Naive thymus-derived CD4-positive, alpha-beta T cell (primary cell): ENCODE measurements at regions of chr11 and their contacts with region 1.

Region 1: GRCh38 chr11:46346886-46347636 is at the start of gene DGKZ:
- DNase-seq: peak; percentile 85 to 100 (median 96)
- ATAC-seq: peak; percentile 92
- H3K4me3 ChIP-seq: peak within 1 kb of the TSS; percentile 91
- H3K4me3 Mint-ChIP-seq: peak within 1 kb of the TSS; percentile 93 to 97 (median 95)
- H3K27ac ChIP-seq: peak within 1 kb of the TSS; percentile 83
- H3K27ac Mint-ChIP-seq: peak within 1 kb of the TSS; percentile 89 to 98 (median 94)
- H3K4me1 ChIP-seq: peaks cover 46 to 79% of the 10 kb centered on the region in 2 donors
- H3K4me1 Mint-ChIP-seq: peaks cover 61 to 85% (median 75%) of the 10 kb centered on the region in 7 donors
- H3K27me3 ChIP-seq: no peaks in the 10 kb centered on the region
- H3K27me3 Mint-ChIP-seq: peaks cover 0 to 3% (median 0%) of the 10 kb centered on the region in 5 donors
- total RNA-seq, gene DGKZ: 146 to 291 (median 263) TPM

Region 2: GRCh38 chr11:45872513-45873356 is 474.3 kb before region 1 on chr11:
- CTCF ChIA-PET with region 1: no interaction called
- POLR2A ChIA-PET with region 1: no interaction called
- intact Hi-C with region 1: no loop called
- DNase-seq: peak in 1 of 9 donors; percentile 16
- ATAC-seq: peak; percentile 73
- H3K4me3 ChIP-seq: no peak overlapping the region
- H3K4me3 Mint-ChIP-seq: no peak overlapping the region
- H3K27ac ChIP-seq: no peak overlapping the region
- H3K27ac Mint-ChIP-seq: no peak overlapping the region
- H3K4me1 ChIP-seq: no peaks in the 10 kb centered on the region
- H3K4me1 Mint-ChIP-seq: peaks cover 0 to 5% (median 0%) of the 10 kb centered on the region in 7 donors
- H3K27me3 ChIP-seq: no peaks in the 10 kb centered on the region
- H3K27me3 Mint-ChIP-seq: no peaks in the 10 kb centered on the region

Region 3: DNA sequence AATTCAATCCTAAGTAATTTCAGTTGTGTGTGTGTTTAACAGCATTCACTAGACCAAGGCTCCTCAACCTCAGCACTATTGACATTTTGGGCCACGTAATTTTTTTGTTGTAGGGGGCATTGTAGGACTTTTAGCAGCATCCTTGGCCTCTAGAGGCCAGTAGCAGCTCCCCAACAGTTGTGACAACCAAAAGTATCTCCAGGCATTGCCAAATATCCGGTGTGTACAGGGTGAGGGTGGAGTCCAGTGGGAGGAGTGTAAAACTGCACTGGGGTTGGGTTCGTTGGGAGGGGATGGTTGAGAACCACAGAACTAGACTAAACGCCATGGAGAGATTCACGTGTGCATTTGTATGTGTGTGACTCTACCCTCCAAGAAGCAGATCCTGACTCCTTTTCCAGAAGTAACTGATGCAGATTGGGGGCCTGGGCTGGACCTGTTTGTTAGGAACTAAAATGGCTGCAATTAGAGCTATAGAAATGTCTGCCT is 219.9 kb before region 1 on chr11:
- CTCF ChIA-PET with region 1: no interaction called
- POLR2A ChIA-PET with region 1: interaction called, 4 read pairs
- intact Hi-C with region 1: loop called (anchors 1 to 5 kb)
- DNase-seq: peak in 8 of 9 donors; percentile 45 to 70 (median 59)
- ATAC-seq: peak; percentile 100
- H3K4me3 ChIP-seq: no peak overlapping the region
- H3K4me3 Mint-ChIP-seq: peak overlapping the region in 6 of 10 donors; percentile 7 to 67 (median 40)
- H3K27ac ChIP-seq: no peak overlapping the region
- H3K27ac Mint-ChIP-seq: peak overlapping the region in 7 of 9 donors; percentile 4 to 78 (median 60)
- H3K4me1 ChIP-seq: peaks cover 4 to 13% of the 10 kb centered on the region in 2 donors
- H3K4me1 Mint-ChIP-seq: peaks cover 8 to 19% (median 17%) of the 10 kb centered on the region in 7 donors
- H3K27me3 ChIP-seq: no peaks in the 10 kb centered on the region
- H3K27me3 Mint-ChIP-seq: peaks cover 0 to 3% (median 0%) of the 10 kb centered on the region in 5 donors

Region 4: DNA sequence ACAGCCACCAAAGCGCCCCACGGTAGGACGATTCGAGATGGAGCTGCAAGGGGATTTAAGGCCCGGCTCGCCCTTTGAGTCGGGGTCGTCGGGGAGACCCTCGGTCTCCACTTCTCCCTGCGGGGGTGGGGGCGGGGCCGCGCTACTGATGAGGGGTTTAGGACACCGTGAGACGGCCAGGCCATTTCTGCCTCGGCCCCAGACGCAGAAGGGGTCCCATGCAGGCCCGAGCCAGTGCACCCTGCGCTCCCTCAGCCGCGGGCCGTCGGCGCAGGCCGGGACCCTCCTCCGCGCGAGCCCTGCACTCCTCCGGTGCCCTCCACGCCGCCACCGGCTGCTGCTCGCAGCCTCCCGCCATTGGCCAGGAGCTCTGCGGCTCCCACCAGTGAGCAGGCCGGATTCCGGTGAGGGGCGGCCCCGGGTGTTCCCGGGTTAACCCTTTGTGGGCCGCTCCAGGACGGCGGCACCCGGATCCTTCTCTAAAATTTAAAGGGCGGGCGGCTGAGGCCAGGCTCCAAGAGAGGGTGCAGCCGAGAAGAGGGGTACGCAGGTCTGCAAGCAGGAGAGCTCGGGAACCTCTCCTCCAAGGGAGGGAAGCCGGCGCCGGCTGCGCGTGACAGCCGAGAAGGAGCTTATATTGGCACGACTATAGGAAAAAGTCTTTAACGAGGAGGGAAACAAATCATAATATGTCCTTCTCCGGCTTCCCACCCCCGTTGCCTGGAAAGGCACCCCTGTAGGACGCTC is 51.6 kb before region 1 on chr11:
- CTCF ChIA-PET with region 1: interaction called, 6 read pairs
- POLR2A ChIA-PET with region 1: no interaction called
- intact Hi-C with region 1: loop called in 1 of 2 experiments (anchors 1 kb)
- DNase-seq: peak; percentile 65 to 82 (median 80)
- ATAC-seq: peak; percentile 98
- H3K4me3 ChIP-seq: peak overlapping the region; percentile 78
- H3K4me3 Mint-ChIP-seq: peak overlapping the region; percentile 83 to 92 (median 86)
- H3K27ac ChIP-seq: peak overlapping the region; percentile 34
- H3K27ac Mint-ChIP-seq: peak overlapping the region in 3 of 9 donors; percentile 32 to 48 (median 38)
- H3K4me1 ChIP-seq: peaks cover 5 to 7% of the 10 kb centered on the region in 2 donors
- H3K4me1 Mint-ChIP-seq: peaks cover 0 to 15% (median 7%) of the 10 kb centered on the region in 7 donors
- H3K27me3 ChIP-seq: peaks cover 5 to 6% of the 10 kb centered on the region in 2 donors
- H3K27me3 Mint-ChIP-seq: peaks cover 0 to 35% (median 5%) of the 10 kb centered on the region in 5 donors

Region 5: DNA sequence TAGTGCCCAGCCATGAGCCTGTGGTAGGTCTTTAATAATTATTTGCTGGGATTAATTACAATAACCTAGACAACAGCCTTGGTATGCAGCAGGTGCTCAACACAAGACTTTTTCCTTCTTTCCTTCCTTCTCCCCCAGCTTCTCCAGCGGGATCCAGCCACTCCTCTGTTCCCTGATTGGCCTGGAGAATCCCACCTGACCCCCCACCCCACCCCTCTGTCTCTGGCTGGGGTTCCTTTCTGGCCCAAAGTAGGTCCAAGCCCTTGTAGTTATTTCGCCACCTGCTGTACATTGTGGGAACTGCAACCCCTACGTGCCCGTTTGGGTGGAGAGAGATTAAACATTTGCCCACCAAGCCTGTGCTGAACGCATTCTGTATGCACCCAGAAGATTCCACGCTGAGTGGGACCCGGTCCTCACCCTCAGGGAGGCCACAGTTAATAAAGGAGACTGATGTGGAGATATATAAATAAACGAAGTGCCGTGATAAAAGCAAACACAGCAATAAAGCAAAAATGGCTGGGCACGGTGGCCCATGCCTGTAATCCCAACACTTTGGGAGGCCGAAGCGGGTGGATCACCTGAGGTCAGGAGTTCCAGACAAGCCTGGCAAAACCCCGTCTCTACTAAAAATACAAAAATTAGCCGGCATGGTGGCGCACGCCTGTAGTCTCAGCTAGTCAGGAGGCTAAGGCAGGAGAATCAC is 31.9 kb before region 1 on chr11:
- CTCF ChIA-PET with region 1: interaction called, 22 read pairs
- POLR2A ChIA-PET with region 1: interaction called, 6 read pairs
- intact Hi-C with region 1: loop called in 1 of 2 experiments (anchors 1 kb)
- DNase-seq: peak; percentile 42 to 76 (median 60)
- ATAC-seq: peak; percentile 88
- H3K4me3 ChIP-seq: no peak overlapping the region
- H3K4me3 Mint-ChIP-seq: peak overlapping the region in 2 of 10 donors; percentile 9 to 40
- H3K27ac ChIP-seq: no peak overlapping the region
- H3K27ac Mint-ChIP-seq: peak overlapping the region in 2 of 9 donors; percentile 2 to 63
- H3K4me1 ChIP-seq: peaks cover 6 to 16% of the 10 kb centered on the region in 2 donors
- H3K4me1 Mint-ChIP-seq: peaks cover 22 to 35% (median 24%) of the 10 kb centered on the region in 7 donors
- H3K27me3 ChIP-seq: no peaks in the 10 kb centered on the region
- H3K27me3 Mint-ChIP-seq: no peaks in the 10 kb centered on the region

Region 6: GRCh38 chr11:46367244-46367915 is 20.3 kb after region 1 on chr11:
- CTCF ChIA-PET with region 1: interaction called, 302 read pairs
- POLR2A ChIA-PET with region 1: interaction called, 226 read pairs
- intact Hi-C with region 1: loop called (anchors 1 kb)
- DNase-seq: peak; percentile 65 to 84 (median 77)
- ATAC-seq: peak; percentile 86
- H3K4me3 ChIP-seq: no peak overlapping the region
- H3K4me3 Mint-ChIP-seq: peak overlapping the region in 5 of 10 donors; percentile 21 to 50 (median 45)
- H3K27ac ChIP-seq: peak overlapping the region; percentile 30
- H3K27ac Mint-ChIP-seq: peak overlapping the region in 5 of 9 donors; percentile 17 to 83 (median 63)
- H3K4me1 ChIP-seq: peaks cover 6 to 25% of the 10 kb centered on the region in 2 donors
- H3K4me1 Mint-ChIP-seq: peaks cover 20 to 52% (median 38%) of the 10 kb centered on the region in 7 donors
- H3K27me3 ChIP-seq: no peaks in the 10 kb centered on the region
- H3K27me3 Mint-ChIP-seq: no peaks in the 10 kb centered on the region

Region 7: DNA sequence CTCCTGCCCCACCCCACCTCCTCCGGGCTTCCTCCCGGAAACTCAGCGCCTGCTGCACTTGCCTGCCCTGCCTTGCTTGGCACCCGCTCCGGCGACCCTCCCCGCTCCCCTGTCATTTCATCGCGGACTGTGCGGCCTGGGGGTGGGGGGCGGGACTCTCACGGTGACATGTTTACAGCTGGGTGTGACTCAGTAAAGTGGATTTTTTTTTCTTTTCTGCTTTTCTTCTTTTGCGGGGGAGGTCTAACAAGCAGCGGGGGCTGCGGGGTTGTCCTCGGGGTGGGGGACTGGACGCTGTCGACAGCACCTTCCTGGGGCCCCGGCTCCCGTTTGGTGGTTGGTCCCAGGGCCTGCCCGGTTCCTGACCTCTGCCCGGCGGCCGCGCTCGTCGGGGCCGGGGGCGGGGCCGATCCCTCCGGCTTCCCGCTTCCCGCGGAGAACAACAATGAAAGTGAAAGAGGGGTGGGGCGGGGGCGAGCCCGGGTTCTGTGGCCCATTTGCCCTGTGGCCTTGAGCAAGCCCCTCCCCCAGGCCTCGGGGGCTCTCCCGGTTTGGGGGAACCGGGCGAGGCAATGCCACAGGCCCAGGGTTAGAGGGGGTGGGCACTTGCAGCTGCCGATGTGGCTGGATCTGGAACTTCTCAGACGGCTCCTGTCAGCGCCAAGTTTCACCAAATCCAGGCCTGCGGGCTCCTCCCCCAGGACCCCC is 33.4 kb after region 1 on chr11:
- CTCF ChIA-PET with region 1: interaction called, 6 read pairs
- POLR2A ChIA-PET with region 1: interaction called, 9 read pairs
- intact Hi-C with region 1: loop called in 1 of 2 experiments (anchors 5 kb)
- DNase-seq: peak in 5 of 9 donors; percentile 29 to 76 (median 44)
- ATAC-seq: peak; percentile 57
- H3K4me3 ChIP-seq: peak overlapping the region; percentile 67
- H3K4me3 Mint-ChIP-seq: peak overlapping the region; percentile 68 to 87 (median 79)
- H3K27ac ChIP-seq: peak overlapping the region; percentile 75
- H3K27ac Mint-ChIP-seq: peak overlapping the region in 8 of 9 donors; percentile 63 to 88 (median 78)
- H3K4me1 ChIP-seq: peaks cover 8% of the 10 kb centered on the region in 2 donors
- H3K4me1 Mint-ChIP-seq: peaks cover 0 to 13% (median 10%) of the 10 kb centered on the region in 7 donors
- H3K27me3 ChIP-seq: peaks cover 0 to 4% of the 10 kb centered on the region in 2 donors
- H3K27me3 Mint-ChIP-seq: peaks cover 0 to 22% (median 7%) of the 10 kb centered on the region in 5 donors

Region 8: GRCh38 chr11:46392421-46393230 is 45.6 kb after region 1 on chr11:
- CTCF ChIA-PET with region 1: interaction called, 3 read pairs
- POLR2A ChIA-PET with region 1: interaction called, 3 read pairs
- intact Hi-C with region 1: loop called in 1 of 2 experiments (anchors 2 kb)
- DNase-seq: peak; percentile 63 to 91 (median 75)
- ATAC-seq: peak; percentile 90
- H3K4me3 ChIP-seq: peak overlapping the region; percentile 35
- H3K4me3 Mint-ChIP-seq: peak overlapping the region; percentile 70 to 84 (median 78)
- H3K27ac ChIP-seq: no peak overlapping the region
- H3K27ac Mint-ChIP-seq: peak overlapping the region in 3 of 9 donors; percentile 54 to 81 (median 73)
- H3K4me1 ChIP-seq: peaks cover 14 to 21% of the 10 kb centered on the region in 2 donors
- H3K4me1 Mint-ChIP-seq: peaks cover 7 to 35% (median 25%) of the 10 kb centered on the region in 7 donors
- H3K27me3 ChIP-seq: peaks cover 0 to 21% of the 10 kb centered on the region in 2 donors
- H3K27me3 Mint-ChIP-seq: peaks cover 26 to 45% (median 36%) of the 10 kb centered on the region in 5 donors

Region 9: GRCh38 chr11:46865340-46865739 is 518.3 kb after region 1 on chr11:
- CTCF ChIA-PET with region 1: no interaction called
- POLR2A ChIA-PET with region 1: no interaction called
- intact Hi-C with region 1: no loop called
- DNase-seq: no peak
- ATAC-seq: no peak
- H3K4me3 ChIP-seq: no peak overlapping the region
- H3K4me3 Mint-ChIP-seq: no peak overlapping the region
- H3K27ac ChIP-seq: no peak overlapping the region
- H3K27ac Mint-ChIP-seq: no peak overlapping the region
- H3K4me1 ChIP-seq: no peaks in the 10 kb centered on the region
- H3K4me1 Mint-ChIP-seq: no peaks in the 10 kb centered on the region
- H3K27me3 ChIP-seq: no peaks in the 10 kb centered on the region
- H3K27me3 Mint-ChIP-seq: peaks cover 0 to 7% (median 0%) of the 10 kb centered on the region in 5 donors